Gastrocnemius medialis (tissue), 4 donors: ENCODE measurements at regions of chr16 and their contacts with region 1.

Region 1: DNA sequence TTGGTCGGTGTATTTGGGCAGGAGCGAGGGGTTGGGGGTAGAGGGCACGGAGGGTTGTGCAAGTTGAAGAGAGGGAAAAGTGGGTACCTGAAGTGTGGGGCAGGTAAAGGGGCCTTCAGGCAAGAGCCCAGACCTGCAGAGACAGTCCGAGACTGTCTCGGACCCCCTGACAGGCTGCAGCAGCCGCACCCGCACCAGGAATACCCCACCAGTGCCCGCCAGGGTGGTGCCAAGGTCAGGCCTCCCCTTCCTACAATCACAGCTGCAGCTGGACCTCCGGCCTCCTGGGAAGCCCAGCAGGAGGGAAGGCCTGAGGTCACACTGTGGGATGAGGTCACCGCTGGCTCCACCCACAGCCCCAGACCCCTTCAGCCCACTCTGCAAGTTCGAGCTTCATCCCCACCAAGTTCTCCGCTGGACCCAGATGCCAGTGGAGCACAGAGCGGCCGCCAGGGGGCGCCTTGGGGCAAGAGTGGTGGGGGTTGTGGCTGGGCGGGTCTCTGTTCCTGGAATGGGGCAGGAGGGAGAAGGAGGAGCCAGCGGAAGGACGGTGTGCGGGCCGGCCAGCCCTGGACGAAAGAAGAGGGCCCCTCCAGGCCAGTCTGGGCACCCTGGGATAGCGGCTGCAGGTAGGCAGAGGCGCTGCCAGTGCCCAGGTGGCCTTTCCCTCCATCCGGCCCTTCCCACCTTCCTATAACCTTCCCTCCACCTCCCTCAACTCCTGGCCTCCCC is at the start of gene HSD3B7:
- DNase-seq: peak; percentile 75 to 85
- ATAC-seq: peak; percentile 81 to 87
- H3K4me3 ChIP-seq: peak within 1 kb of the TSS; percentile 50 to 66 (median 55)
- H3K27ac ChIP-seq: peak within 1 kb of the TSS; percentile 69 to 86 (median 78)
- H3K4me1 ChIP-seq: peaks cover 9 to 15% of the 10 kb centered on the region in 2 donors
- H3K27me3 ChIP-seq: no peaks in the 10 kb centered on the region
- CTCF ChIP-seq: peak; percentile 85 to 98 (median 96)
- POLR2A ChIP-seq: no peak
- total RNA-seq, gene HSD3B7: 1.5 to 6.8 (median 5.4) TPM

Region 2: DNA sequence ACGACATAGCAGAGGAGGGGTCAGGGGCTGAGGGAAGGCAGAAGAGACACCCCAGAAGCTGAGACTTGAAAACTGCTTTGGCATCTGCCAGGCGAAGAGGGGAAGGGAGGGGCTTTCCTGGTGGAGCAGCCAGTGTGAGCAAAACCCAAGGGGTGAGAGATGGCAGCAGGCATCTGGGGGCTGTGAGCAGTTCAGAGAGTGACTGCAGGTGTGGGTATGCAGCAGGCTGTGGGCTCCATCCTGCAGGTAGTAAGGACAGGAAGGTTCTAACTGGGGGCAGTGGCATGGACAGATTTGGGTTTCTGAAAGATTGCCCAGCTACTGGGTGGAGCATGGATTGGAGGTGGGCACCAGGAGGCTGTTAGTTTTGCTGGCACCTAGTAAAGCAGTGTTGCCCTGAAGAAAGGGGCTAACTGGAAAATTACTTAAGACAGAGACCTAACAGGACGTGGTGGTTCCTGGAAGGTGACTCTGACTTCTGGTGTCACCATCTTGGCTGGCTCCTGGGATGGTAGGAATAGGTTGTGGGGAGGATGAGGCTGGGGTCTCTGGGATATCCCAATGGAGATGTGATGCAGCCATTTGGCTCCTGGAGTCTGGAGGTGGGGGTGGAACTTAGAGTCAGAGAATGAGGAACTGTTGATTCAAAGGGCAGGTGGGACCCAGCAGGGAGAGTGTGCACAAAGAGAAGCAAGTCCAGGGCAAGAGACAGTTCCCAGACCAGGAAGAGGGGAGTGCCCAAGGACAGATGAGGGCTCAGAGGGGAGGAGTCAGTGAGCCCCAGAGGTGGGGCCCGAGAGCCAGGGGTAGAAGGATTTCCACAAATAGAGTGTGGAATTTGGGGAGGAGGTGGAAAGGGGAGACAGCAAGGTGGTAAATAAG is 102.2 kb before region 1 on chr16:
- in situ Hi-C with region 1: no loop called
- intact Hi-C with region 1: no loop called
- DNase-seq: no peak
- ATAC-seq: no peak
- H3K4me3 ChIP-seq: no peak overlapping the region
- H3K27ac ChIP-seq: no peak overlapping the region
- H3K4me1 ChIP-seq: no peaks in the 10 kb centered on the region
- H3K27me3 ChIP-seq: no peaks in the 10 kb centered on the region
- CTCF ChIP-seq: no peak
- POLR2A ChIP-seq: no peak

Region 3: DNA sequence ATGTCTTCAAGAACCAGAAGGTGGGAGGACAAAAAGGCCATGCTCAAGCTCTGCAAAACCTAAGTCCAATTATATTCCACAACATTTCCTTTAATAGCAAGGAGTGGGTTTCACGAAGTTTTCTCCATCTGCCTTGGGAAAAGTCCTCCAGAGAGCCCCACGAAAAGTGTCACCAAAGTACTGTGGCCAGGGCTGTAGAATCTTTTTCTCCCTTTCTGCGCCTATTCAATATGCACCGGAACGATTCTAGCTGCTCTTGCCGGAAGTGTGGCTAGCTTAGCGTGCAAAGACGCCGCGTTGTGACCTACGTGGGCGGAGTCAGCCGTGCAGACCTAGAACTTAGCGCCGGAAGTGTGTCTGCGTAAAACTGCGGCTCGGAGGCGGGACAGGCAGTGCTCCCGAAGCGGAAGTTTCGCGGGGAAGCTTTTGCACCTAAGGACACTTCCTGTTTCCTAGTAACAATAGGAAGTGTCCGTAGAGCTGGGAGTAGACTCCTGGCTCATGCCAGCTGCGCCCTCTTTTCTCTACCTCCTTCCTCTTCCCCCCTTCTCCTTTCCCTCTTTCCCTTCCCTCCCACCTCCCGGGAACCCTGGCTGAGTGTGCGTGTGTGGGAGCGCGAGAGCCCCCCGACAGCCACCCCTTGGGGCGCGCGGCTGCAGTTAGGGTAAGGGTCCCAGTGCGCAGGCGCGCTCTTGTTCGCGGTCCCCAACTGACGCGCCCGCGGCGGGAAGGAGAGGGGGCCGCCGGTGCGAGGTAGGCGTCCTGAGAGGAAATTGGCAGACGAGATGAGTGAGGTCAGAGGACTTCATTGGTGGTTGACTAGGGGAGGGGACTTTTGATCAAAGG is 89.4 kb after region 1 on chr16 and contains the starts of genes ZNF646 and ZNF668:
- in situ Hi-C with region 1: loop called in 1 of 4 experiments (anchors 25 kb)
- intact Hi-C with region 1: loop called (anchors 5 kb)
- DNase-seq: peak; percentile 98
- ATAC-seq: peak; percentile 88 to 94
- H3K4me3 ChIP-seq: peak within 1 kb of the TSS; percentile 95 to 100 (median 96)
- H3K27ac ChIP-seq: peak within 1 kb of the TSS; percentile 97 to 99 (median 99)
- H3K4me1 ChIP-seq: peaks cover 24 to 30% of the 10 kb centered on the region in 2 donors
- H3K27me3 ChIP-seq: no peaks in the 10 kb centered on the region
- CTCF ChIP-seq: no peak
- POLR2A ChIP-seq: peak; percentile 78 to 93
- total RNA-seq, gene ZNF646: 11.7 to 33.2 (median 21.5) TPM
- total RNA-seq, gene ZNF668: 6.6 to 16.0 (median 11.0) TPM

Region 4: GRCh38 chr16:31142109-31143010 is 157.5 kb after region 1 on chr16:
- in situ Hi-C with region 1: no loop called
- intact Hi-C with region 1: loop called (anchors 1 kb)
- DNase-seq: peak; percentile 97 to 99
- ATAC-seq: peak; percentile 78 to 83
- H3K4me3 ChIP-seq: peak overlapping the region; percentile 42 to 75 (median 58)
- H3K27ac ChIP-seq: peak overlapping the region; percentile 79 to 88 (median 82)
- H3K4me1 ChIP-seq: peaks cover 19 to 22% of the 10 kb centered on the region in 2 donors
- H3K27me3 ChIP-seq: no peaks in the 10 kb centered on the region
- CTCF ChIP-seq: peak; percentile 98 to 100 (median 99)
- POLR2A ChIP-seq: peak; percentile 28 to 46

Region 5: DNA sequence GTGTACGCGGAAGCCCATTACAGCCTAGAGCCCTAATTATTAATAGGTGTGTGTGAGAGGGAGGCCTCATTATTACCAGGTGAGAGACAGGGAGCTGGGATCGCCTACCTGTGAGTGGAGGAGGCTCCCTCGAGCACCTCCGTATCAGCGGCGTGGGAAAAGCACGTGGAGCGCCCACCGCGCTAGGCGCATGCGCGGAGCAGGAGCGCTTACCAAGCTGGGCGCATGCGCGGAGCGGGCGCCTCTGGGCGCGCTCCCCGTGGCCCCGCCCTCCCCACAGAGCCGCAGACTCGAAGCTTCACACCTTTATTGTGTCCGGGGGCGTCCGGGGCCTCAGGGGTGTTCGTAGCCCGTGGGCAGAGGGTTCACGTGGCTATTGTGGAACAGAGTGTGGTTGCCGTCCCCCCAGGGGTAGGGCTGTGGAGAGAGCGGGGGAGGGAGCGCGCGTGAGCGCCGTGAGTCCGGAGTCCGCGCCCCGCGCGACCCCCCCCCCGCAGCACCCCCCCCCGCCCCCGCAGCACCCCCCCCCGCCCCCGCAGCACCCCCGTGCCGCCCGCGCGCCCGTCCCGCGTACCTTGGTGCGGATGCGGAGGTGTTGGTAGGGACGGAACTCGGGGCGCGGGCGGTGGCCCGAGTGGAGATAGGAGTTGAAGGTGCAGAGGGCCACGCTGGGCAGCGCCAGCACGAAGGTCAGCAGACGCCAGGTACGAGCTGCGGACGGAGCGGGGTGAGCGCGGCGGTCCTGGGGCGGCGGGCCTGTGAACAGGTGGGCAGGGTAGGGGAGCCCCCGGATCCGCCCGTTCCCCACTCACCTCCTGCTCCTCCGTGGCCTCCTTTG is 442.8 kb after region 1 on chr16:
- in situ Hi-C with region 1: loop called in 1 of 4 experiments (anchors 25 kb)
- intact Hi-C with region 1: no loop called
- DNase-seq: peak; percentile 62 to 84
- ATAC-seq: peak; percentile 12 to 28
- H3K4me3 ChIP-seq: peak overlapping the region; percentile 67 to 83 (median 79)
- H3K27ac ChIP-seq: peak overlapping the region; percentile 92 to 100 (median 98)
- H3K4me1 ChIP-seq: peaks cover 62 to 77% of the 10 kb centered on the region in 2 donors
- H3K27me3 ChIP-seq: no peaks in the 10 kb centered on the region
- CTCF ChIP-seq: no peak
- POLR2A ChIP-seq: peak in 1 of 2 donors; percentile 10

Region 6: GRCh38 chr16:31713071-31713944 is 728.5 kb after region 1 on chr16:
- in situ Hi-C with region 1: no loop called
- intact Hi-C with region 1: loop called (anchors 10 kb)
- DNase-seq: peak; percentile 87 to 92
- ATAC-seq: peak; percentile 95 to 96
- H3K4me3 ChIP-seq: peak overlapping the region; percentile 89 to 96 (median 92)
- H3K27ac ChIP-seq: peak overlapping the region; percentile 94 to 96 (median 94)
- H3K4me1 ChIP-seq: peaks cover 11 to 12% of the 10 kb centered on the region in 2 donors
- H3K27me3 ChIP-seq: no peaks in the 10 kb centered on the region
- CTCF ChIP-seq: no peak
- POLR2A ChIP-seq: peak; percentile 78 to 87

Region 7: GRCh38 chr16:31873556-31874365 is 888.9 kb after region 1 on chr16 and contains the start of gene ZNF267:
- in situ Hi-C with region 1: loop called in 3 of 4 experiments (anchors 25 kb)
- intact Hi-C with region 1: loop called (anchors 2 kb)
- DNase-seq: peak; percentile 88 to 94
- ATAC-seq: peak; percentile 97 to 98
- H3K4me3 ChIP-seq: peak within 1 kb of the TSS; percentile 77 to 98 (median 88)
- H3K27ac ChIP-seq: peak within 1 kb of the TSS; percentile 76 to 92 (median 84)
- H3K4me1 ChIP-seq: peaks cover 16 to 23% of the 10 kb centered on the region in 2 donors
- H3K27me3 ChIP-seq: no peaks in the 10 kb centered on the region
- CTCF ChIP-seq: no peak
- POLR2A ChIP-seq: peak; percentile 76 to 77
- total RNA-seq, gene ZNF267: 6.5 to 13.3 (median 8.2) TPM